Right ventricle myocardium superior (tissue), 1 donor: ENCODE measurements at regions of chr3 and their contacts with region 1.

Region 1: GRCh38 chr3:178443634-178444033 is 92.6 kb upstream of the KCNMB2 start:
- DNase-seq: no peak
- ATAC-seq: peak; percentile 71

Region 2: GRCh38 chr3:178551916-178552321 is 108.3 kb after region 1 on chr3:
- intact Hi-C with region 1: no loop called
- DNase-seq: peak; percentile 36
- ATAC-seq: peak; percentile 77

Region 3: GRCh38 chr3:178950676-178951075 is 507.0 kb after region 1 on chr3:
- intact Hi-C with region 1: loop called (anchors 5 kb)
- DNase-seq: no peak
- ATAC-seq: no peak

Region 4: GRCh38 chr3:178966299-178967176 is 522.9 kb after region 1 on chr3:
- intact Hi-C with region 1: loop called (anchors 5 kb)
- DNase-seq: no peak
- ATAC-seq: peak; percentile 82